Activated CD4-positive, alpha-beta T cell treated with anti-CD3 and anti-CD28 coated beads for 36 hours (primary cell): ENCODE measurements at regions of chr15 and their contacts with region 1.

Region 1: GRCh38 chr15:65286704-65287519 is at the start of gene PARP16:
- DNase-seq: peak; percentile 96
- ATAC-seq: peak; percentile 98
- H3K4me3 Mint-ChIP-seq: peak within 1 kb of the TSS; percentile 87
- H3K27ac Mint-ChIP-seq: peak within 1 kb of the TSS; percentile 89
- H3K4me1 Mint-ChIP-seq: peaks cover 30% of the 10 kb centered on the region
- H3K27me3 Mint-ChIP-seq: no peaks in the 10 kb centered on the region
- total RNA-seq, gene PARP16: 17.9 to 20.1 TPM

Region 2: DNA sequence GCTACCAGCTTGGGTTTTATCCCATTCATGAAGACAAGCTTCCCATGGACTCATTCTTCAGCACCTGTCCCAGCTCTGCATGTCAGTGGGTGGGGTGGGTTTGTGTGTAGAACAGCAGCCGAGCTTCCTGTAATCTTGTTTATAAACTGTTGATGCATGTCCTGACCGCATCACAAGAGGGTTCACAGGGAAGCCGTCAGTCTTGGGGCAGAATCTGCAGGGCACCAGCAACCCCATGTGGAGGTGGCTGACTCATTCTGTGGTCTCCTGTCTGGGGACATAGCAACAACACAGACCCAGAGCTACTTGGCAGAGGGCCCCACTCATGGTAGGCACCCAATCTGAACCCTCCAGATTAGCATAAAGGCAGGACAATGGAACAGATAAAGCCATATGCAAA is 1276.2 kb before region 1 on chr15:
- CTCF ChIA-PET with region 1: no interaction called
- POLR2A ChIA-PET with region 1: no interaction called
- intact Hi-C with region 1: no loop called
- DNase-seq: peak; percentile 90
- ATAC-seq: peak; percentile 78
- H3K4me3 Mint-ChIP-seq: peak overlapping the region; percentile 31
- H3K27ac Mint-ChIP-seq: peak overlapping the region; percentile 87
- H3K4me1 Mint-ChIP-seq: peaks cover 45% of the 10 kb centered on the region
- H3K27me3 Mint-ChIP-seq: no peaks in the 10 kb centered on the region

Region 3: GRCh38 chr15:65133548-65134200 is 153.2 kb before region 1 on chr15 and contains the start of gene PDCD7:
- CTCF ChIA-PET with region 1: interaction called, 4 read pairs
- POLR2A ChIA-PET with region 1: no interaction called
- intact Hi-C with region 1: loop called in 1 of 2 experiments (anchors 1 kb)
- DNase-seq: peak; percentile 91
- ATAC-seq: peak; percentile 96
- H3K4me3 Mint-ChIP-seq: peak within 1 kb of the TSS; percentile 85
- H3K27ac Mint-ChIP-seq: peak within 1 kb of the TSS; percentile 93
- H3K4me1 Mint-ChIP-seq: peaks cover 26% of the 10 kb centered on the region
- H3K27me3 Mint-ChIP-seq: no peaks in the 10 kb centered on the region
- total RNA-seq, gene PDCD7: 16.6 to 24.8 TPM

Region 4: DNA sequence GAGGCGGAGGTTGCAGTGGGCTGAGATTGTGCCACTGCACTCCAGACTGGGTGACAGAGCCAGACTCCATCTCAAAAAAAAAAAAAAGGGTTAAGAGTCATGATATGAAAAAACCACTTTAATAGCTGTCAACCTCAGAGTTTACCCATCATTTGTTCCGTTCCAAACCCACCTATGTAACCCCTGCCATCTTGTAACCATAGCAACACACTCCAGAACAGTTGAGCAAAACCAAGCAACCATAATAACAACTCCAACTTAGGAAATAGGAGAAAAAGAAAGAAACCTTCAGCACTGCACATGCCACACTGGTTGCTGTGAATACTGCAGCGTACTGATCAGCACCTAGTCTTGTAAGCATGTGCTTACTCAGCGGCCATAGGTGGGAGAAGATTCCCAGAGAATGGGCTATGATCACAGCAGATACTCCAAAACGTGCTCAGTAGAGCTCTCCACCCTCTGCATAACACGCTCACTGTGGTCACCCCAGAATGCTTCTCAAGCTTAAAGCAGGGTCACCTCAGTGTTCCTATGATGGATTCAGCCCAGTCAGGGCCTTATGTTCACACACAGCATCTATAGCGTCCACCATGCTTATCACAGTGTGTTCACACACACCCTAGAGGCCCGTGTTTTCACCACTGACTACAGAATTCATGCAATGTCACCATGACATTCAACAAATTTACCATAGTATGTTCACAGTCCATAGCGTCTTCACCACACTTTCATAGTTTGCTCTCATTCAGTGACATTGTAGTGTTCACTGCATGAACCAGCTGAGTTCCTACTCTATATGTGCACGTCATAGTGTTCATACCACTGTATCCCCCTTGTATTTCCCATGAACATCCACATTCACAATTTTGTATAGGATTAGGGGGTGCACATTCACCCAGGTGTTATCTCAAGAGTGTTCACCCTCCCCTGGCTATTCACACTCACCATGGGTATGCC is 69.1 kb before region 1 on chr15:
- CTCF ChIA-PET with region 1: interaction called, 5 read pairs
- POLR2A ChIA-PET with region 1: interaction called, 10 read pairs
- intact Hi-C with region 1: no loop called
- DNase-seq: no peak
- ATAC-seq: peak; percentile 28
- H3K4me3 Mint-ChIP-seq: no peak overlapping the region
- H3K27ac Mint-ChIP-seq: no peak overlapping the region
- H3K4me1 Mint-ChIP-seq: peaks cover 14% of the 10 kb centered on the region
- H3K27me3 Mint-ChIP-seq: no peaks in the 10 kb centered on the region

Region 5: DNA sequence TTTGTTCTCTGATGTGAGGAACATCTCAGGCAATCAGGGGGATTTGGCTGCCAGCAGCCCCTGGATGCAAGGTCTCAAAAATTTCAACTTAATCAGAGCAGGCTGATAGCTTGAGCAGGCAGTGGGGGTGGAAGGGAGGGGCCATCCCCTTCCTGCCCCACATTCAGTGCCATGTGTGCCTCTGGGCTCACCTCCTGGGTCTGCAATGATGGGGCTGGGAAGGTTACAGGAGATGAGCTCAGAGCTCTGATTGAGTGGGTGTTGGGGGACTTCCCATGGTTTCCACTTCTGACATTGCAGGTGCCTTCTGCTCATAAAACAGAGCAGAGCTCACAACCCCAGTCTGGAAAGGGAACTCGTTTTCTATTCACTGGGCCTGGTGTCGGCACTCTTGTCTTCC is 37.3 kb before region 1 on chr15:
- CTCF ChIA-PET with region 1: interaction called, 9 read pairs
- POLR2A ChIA-PET with region 1: interaction called, 15 read pairs
- intact Hi-C with region 1: loop called in 1 of 2 experiments (anchors 1 kb)
- DNase-seq: peak; percentile 92
- ATAC-seq: peak; percentile 99
- H3K4me3 Mint-ChIP-seq: peak overlapping the region; percentile 15
- H3K27ac Mint-ChIP-seq: peak overlapping the region; percentile 90
- H3K4me1 Mint-ChIP-seq: peaks cover 24% of the 10 kb centered on the region
- H3K27me3 Mint-ChIP-seq: no peaks in the 10 kb centered on the region

Region 6: DNA sequence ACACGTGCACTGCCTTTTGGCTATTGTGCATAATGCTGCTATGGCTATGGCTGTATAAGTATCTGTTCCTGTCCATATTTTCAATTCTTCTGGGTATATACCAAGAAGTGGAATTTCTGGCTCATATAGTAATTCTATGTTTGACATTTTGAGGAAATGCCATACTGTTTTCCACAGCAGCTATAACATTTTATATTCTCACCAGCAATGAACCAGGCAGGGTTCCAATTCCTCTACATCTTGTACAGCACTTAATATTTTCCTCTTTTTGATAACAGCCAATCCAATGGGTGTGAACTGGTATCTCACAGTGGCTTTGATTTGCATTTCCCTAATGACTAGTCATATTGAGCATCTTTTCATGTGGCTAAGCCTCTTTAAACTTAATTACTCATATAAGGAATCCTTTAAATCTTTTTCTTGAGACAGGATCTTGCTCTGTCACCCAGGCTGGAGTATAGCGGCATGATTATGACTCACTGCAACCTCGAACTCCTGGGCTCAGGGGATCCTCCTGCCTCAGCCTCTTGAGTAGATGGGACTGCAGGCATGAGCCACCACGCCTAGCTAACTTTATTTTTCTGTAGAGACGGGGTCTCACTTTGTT is 173.9 kb after region 1 on chr15:
- CTCF ChIA-PET with region 1: no interaction called
- POLR2A ChIA-PET with region 1: no interaction called
- intact Hi-C with region 1: no loop called
- DNase-seq: peak; percentile 72
- ATAC-seq: peak; percentile 99
- H3K4me3 Mint-ChIP-seq: no peak overlapping the region
- H3K27ac Mint-ChIP-seq: peak overlapping the region; percentile 12
- H3K4me1 Mint-ChIP-seq: peaks cover 10% of the 10 kb centered on the region
- H3K27me3 Mint-ChIP-seq: no peaks in the 10 kb centered on the region